ENCODE measurements at regions of chr11 and their contacts with region 1.

Region 1: DNA sequence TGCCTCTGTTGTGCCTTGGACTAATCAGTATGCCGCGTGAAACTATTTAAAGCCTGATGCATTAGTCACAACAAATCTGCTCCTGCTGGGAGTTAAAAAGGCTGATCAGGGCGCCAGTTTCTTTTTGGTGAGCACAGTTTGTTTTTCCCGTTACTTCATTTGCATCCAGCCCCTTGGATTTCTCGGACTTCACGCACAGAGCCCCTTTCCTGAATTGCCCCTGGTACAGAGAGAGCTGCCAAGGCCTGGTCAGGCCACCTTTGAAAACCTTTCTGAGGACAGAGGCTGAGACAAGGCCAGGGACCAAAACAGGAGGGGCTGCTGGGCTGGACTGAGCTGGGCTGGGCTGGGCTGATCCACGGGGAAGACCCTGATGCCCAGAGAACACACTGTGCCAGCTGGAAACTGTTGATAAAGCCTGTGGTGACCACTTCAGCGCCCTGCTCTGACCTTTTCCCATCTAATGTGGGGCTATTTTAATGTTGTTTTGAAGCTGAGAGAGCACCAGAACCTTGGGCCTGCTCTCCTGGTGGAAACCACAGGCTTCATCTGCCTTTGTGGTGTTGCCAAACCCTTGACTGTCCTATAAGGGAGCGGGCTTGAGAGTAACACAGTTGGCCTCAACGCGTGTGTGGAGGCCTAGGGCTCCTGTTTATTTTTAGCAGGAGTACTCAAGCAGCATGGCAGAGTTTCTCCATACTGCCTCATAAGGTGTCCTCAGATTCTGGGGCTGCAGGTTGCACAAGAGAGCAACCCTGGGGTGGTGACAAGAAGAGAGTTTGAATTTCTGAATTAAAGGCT is 44.2 kb downstream of the NAV2 start:
- DNase-seq: no peak
- H3K4me3 ChIP-seq: no peak overlapping the region
- H3K27ac ChIP-seq: peak overlapping the region; percentile 38
- H3K4me1 ChIP-seq: peaks cover 8% of the 10 kb centered on the region
- H3K27me3 ChIP-seq: no peaks in the 10 kb centered on the region
- CTCF ChIP-seq: no peak
- POLR2A ChIP-seq: no peak

Region 2: GRCh38 chr11:19561011-19561410 is 195.9 kb before region 1 on chr11:
- intact Hi-C with region 1: loop called (anchors 5 kb)
- DNase-seq: no peak
- H3K4me3 ChIP-seq: no peak overlapping the region
- H3K27ac ChIP-seq: no peak overlapping the region
- H3K4me1 ChIP-seq: peaks cover 12% of the 10 kb centered on the region
- H3K27me3 ChIP-seq: no peaks in the 10 kb centered on the region
- CTCF ChIP-seq: no peak
- POLR2A ChIP-seq: no peak

Region 3: GRCh38 chr11:19646921-19647320 is 110.0 kb before region 1 on chr11:
- intact Hi-C with region 1: no loop called
- DNase-seq: peak in 1 of 2 donors; percentile 64
- H3K4me3 ChIP-seq: no peak overlapping the region
- H3K27ac ChIP-seq: no peak overlapping the region
- H3K4me1 ChIP-seq: peaks cover 9% of the 10 kb centered on the region
- H3K27me3 ChIP-seq: no peaks in the 10 kb centered on the region
- CTCF ChIP-seq: no peak
- POLR2A ChIP-seq: no peak